Activated naive CD4-positive, alpha-beta T cell treated with anti-CD3 and anti-CD28 coated beads, Interleukin-2, amount 10 ng/mL, durations not matched to agents 7 days and 5 days (primary cell): ENCODE measurements at regions of chr5 and their contacts with region 1.

Region 1: DNA sequence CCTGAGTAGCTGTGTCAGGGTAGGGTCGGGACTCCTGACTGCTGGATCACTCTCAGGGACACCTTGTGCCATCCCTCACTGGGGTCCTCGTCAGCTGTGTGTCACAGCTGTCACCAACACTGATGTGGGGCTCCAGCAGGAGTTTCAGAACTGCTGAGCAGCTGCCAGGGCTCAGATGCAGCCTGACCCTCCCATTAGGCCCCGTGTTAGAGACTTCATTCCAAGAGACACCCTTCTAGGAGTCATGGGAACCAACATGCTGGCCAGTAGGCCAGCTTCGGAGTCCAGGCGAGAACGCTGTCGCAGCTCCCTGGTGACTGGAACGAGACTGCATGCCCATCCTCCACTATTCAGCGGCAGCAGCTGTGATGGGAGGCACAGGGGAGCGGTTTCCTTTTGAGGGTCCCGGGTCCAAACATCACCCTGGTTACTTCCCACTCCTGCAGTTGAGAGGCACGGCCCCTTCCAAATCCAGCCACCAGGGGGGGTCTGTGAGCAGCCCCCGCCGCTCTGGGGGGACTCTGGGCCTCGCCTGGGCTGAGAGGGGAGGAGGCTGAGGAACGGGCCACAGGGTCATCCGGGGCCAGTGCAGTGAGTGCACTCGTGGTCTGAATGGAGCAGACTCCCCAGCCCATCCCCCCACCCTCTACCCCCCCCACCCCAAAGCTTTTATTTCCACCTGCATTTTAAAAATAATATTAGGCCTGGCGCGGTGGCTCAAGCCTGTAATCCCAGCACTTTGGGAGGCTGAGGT is 12.6 kb upstream of the TCF7 start:
- DNase-seq: peak; percentile 80
- H3K4me3 Mint-ChIP-seq: no peak overlapping the region
- H3K27ac Mint-ChIP-seq: peak overlapping the region; percentile 52
- H3K4me1 Mint-ChIP-seq: peaks cover 93% of the 10 kb centered on the region
- H3K27me3 Mint-ChIP-seq: peaks cover 9% of the 10 kb centered on the region

Region 2: DNA sequence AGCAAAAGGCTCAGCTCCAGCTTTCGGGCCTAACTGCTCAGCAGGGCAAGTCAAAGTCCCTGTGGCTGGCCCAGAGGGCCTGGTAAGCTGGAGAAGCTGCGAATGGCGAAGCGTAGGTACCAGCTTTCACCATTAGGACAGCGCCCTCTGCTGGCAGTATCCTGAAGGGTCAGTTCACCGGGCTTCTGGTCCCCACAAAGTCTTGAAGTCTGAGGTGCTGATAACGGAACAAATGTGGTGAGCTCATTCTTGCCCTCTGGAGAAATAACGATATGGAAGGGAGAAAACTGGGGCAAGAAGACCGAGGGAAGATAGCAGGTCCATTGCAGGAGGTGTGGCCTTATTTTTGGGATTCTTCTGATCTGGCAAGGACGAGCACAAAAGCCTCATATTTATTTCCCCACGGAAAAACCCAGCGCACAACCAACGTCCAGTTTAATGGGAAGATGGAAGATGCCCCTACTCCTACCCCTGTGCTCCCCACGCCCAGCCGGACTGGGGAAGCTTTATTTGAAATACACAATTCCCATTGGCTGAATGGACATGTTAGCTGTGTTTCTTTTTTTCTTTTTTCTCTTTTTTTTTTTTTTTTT is 1281.6 kb before region 1 on chr5:
- CTCF ChIA-PET with region 1: no interaction called
- DNase-seq: peak; percentile 93
- H3K4me3 Mint-ChIP-seq: peak overlapping the region; percentile 40
- H3K27ac Mint-ChIP-seq: no peak overlapping the region
- H3K4me1 Mint-ChIP-seq: peaks cover 17% of the 10 kb centered on the region
- H3K27me3 Mint-ChIP-seq: peaks cover 75% of the 10 kb centered on the region

Region 3: GRCh38 chr5:134004592-134005375 is 97.1 kb before region 1 on chr5 and contains the start of gene VDAC1:
- CTCF ChIA-PET with region 1: no interaction called
- DNase-seq: peak; percentile 91
- H3K4me3 Mint-ChIP-seq: peak within 1 kb of the TSS; percentile 94
- H3K27ac Mint-ChIP-seq: peak within 1 kb of the TSS; percentile 98
- H3K4me1 Mint-ChIP-seq: peaks cover 50% of the 10 kb centered on the region
- H3K27me3 Mint-ChIP-seq: peaks cover 5% of the 10 kb centered on the region

Region 4: GRCh38 chr5:134053840-134054338 is 48.0 kb before region 1 on chr5:
- CTCF ChIA-PET with region 1: interaction called, 16 read pairs
- DNase-seq: no peak
- H3K4me3 Mint-ChIP-seq: peak overlapping the region; percentile 7
- H3K27ac Mint-ChIP-seq: peak overlapping the region; percentile 80
- H3K4me1 Mint-ChIP-seq: peaks cover 37% of the 10 kb centered on the region
- H3K27me3 Mint-ChIP-seq: peaks cover 2% of the 10 kb centered on the region

Region 5: GRCh38 chr5:134070725-134071613 is 30.9 kb before region 1 on chr5:
- CTCF ChIA-PET with region 1: interaction called, 31 read pairs
- DNase-seq: peak; percentile 58
- H3K4me3 Mint-ChIP-seq: peak overlapping the region; percentile 53
- H3K27ac Mint-ChIP-seq: peak overlapping the region; percentile 16
- H3K4me1 Mint-ChIP-seq: peaks cover 58% of the 10 kb centered on the region
- H3K27me3 Mint-ChIP-seq: peaks cover 11% of the 10 kb centered on the region

Region 6: GRCh38 chr5:134077926-134078580 is 23.8 kb before region 1 on chr5:
- CTCF ChIA-PET with region 1: interaction called, 34 read pairs
- DNase-seq: peak; percentile 54
- H3K4me3 Mint-ChIP-seq: no peak overlapping the region
- H3K27ac Mint-ChIP-seq: peak overlapping the region; percentile 94
- H3K4me1 Mint-ChIP-seq: peaks cover 61% of the 10 kb centered on the region
- H3K27me3 Mint-ChIP-seq: no peaks in the 10 kb centered on the region

Region 7: GRCh38 chr5:134083517-134083916 is 18.3 kb before region 1 on chr5:
- CTCF ChIA-PET with region 1: interaction called, 34 read pairs
- DNase-seq: no peak
- H3K4me3 Mint-ChIP-seq: no peak overlapping the region
- H3K27ac Mint-ChIP-seq: no peak overlapping the region
- H3K4me1 Mint-ChIP-seq: peaks cover 79% of the 10 kb centered on the region
- H3K27me3 Mint-ChIP-seq: peaks cover 4% of the 10 kb centered on the region

Region 8: DNA sequence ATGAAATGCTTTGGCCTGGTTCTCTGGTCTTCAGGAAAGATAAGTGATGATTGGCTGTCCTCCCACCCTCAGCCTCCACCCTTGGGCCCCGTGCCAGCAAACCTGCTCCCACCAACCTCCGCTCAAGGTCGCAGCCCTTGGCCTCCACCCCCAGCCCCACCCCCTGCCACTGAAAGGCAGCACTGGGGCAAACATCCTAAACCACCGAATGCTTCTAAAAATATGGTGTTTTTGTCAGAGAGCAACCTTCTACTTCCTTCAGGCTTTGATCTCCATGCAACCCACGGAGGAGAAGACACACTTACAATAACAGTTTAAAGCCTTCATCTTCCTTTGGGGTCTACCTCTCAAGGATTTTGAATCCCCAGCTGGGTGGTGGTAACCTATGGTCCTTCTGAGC is 11.3 kb before region 1 on chr5:
- CTCF ChIA-PET with region 1: interaction called, 34 read pairs
- DNase-seq: peak; percentile 83
- H3K4me3 Mint-ChIP-seq: peak overlapping the region; percentile 37
- H3K27ac Mint-ChIP-seq: peak overlapping the region; percentile 96
- H3K4me1 Mint-ChIP-seq: peaks cover 83% of the 10 kb centered on the region
- H3K27me3 Mint-ChIP-seq: peaks cover 25% of the 10 kb centered on the region

Region 9: DNA sequence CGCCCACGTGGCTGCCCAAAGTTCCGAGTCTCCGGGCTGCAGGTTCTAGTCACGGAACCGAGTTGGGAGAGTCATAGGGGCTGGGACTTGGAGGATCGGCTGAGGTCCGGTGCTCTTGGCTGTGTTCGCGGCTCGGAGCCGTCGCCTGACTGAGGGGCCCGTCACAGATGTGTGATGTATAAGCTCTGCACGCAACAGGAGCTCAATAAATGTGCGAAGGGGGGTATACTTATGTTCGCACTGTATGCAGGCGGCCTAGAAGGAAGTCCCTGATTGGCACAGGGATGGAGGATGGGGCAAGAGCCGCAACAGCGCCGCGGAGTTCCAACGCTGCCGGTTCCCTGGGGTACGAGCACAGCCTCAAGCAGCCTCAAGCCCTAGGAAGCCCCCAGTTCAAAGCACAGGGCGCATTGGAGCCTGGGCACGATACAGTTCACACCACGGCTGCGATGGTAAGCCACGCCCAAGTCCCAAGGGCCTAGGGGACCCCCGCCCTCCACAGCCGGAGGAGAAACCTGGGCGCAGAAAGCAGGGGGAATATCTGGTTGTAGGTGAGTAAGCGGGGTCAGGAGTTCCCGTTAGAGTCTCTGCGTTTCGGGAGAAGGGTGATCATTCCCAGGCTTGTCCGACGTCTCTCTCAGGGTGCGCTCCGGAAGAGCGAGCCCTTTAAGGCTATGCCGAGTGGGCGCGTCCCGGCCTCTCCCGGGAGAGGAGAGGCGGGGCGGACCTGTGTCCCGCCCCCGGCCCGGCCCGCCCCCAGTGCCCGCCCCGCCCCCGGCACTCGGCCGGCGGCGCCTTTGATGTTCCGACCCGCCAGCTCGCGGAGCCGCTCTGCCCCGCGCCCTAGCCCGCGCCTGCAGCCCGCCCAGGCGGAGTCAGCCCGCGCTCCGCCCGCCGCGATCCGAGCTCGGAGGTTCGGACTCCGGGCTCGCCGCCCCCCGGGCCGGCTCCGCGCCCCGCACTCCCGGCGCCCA is 12.3 kb after region 1 on chr5 and contains the start of gene TCF7:
- CTCF ChIA-PET with region 1: interaction called, 31 read pairs
- DNase-seq: peak; percentile 81
- H3K4me3 Mint-ChIP-seq: peak within 1 kb of the TSS; percentile 87
- H3K27ac Mint-ChIP-seq: peak within 1 kb of the TSS; percentile 95
- H3K4me1 Mint-ChIP-seq: peaks cover 69% of the 10 kb centered on the region
- H3K27me3 Mint-ChIP-seq: peaks cover 29% of the 10 kb centered on the region

Region 10: GRCh38 chr5:134125039-134126015 is 23.5 kb after region 1 on chr5:
- CTCF ChIA-PET with region 1: no interaction called
- DNase-seq: no peak
- H3K4me3 Mint-ChIP-seq: peak overlapping the region; percentile 79
- H3K27ac Mint-ChIP-seq: peak overlapping the region; percentile 95
- H3K4me1 Mint-ChIP-seq: peaks cover 100% of the 10 kb centered on the region
- H3K27me3 Mint-ChIP-seq: peaks cover 12% of the 10 kb centered on the region

Region 11: DNA sequence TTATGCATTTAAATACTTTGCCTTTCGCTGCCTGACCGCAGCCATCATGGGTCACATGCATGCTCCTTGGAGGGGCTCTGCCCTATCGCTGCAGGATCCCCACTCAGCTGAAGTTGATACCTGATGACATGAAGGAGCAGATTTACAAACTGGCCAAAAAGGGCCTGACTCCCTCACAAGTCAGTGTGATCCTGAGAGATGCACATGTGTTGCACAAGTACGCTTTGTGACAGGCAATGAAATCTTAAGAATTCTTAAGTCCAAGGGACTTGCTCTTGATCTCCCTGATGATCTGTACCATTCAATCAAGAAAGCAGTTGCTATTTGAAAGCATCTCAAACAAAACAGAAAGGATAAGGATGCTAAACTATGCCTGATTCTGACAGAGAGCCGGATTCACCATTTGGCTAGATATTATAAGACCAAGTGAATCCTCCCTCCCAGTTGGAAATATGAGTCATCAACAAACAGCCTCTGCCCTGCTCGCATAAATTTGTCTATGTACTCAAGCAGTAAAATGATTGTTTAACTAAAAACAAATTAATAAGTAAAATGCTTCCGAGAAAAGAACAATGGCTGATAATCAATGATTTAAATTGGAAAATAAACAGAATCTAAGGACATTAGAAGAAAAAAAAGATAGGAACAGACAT is 165.6 kb after region 1 on chr5:
- CTCF ChIA-PET with region 1: no interaction called
- DNase-seq: no peak
- H3K4me3 Mint-ChIP-seq: no peak overlapping the region
- H3K27ac Mint-ChIP-seq: no peak overlapping the region
- H3K4me1 Mint-ChIP-seq: no peaks in the 10 kb centered on the region
- H3K27me3 Mint-ChIP-seq: peaks cover 27% of the 10 kb centered on the region